ENCODE measurements at regions of chr19 and their contacts with region 1.

Region 1: GRCh38 chr19:58380722-58381466 is at the start of gene ZNF837:
- DNase-seq: peak; percentile 99
- ATAC-seq: peak; percentile 89
- H3K4me3 Mint-ChIP-seq: peak within 1 kb of the TSS; percentile 91
- H3K27ac Mint-ChIP-seq: peak within 1 kb of the TSS; percentile 94
- H3K4me1 Mint-ChIP-seq: peaks cover 19% of the 10 kb centered on the region
- H3K27me3 Mint-ChIP-seq: no peaks in the 10 kb centered on the region
- total RNA-seq, gene ZNF837: 2.0 to 2.5 TPM

Region 2: GRCh38 chr19:58228585-58229254 is 152.2 kb before region 1 on chr19 and contains the start of gene ZNF544:
- CTCF ChIA-PET with region 1: no interaction called
- POLR2A ChIA-PET with region 1: no interaction called
- intact Hi-C with region 1: loop called in 1 of 2 experiments (anchors 2 kb)
- DNase-seq: peak; percentile 85
- ATAC-seq: peak; percentile 87
- H3K4me3 Mint-ChIP-seq: peak within 1 kb of the TSS; percentile 91
- H3K27ac Mint-ChIP-seq: peak within 1 kb of the TSS; percentile 95
- H3K4me1 Mint-ChIP-seq: peaks cover 24% of the 10 kb centered on the region
- H3K27me3 Mint-ChIP-seq: no peaks in the 10 kb centered on the region
- total RNA-seq, gene ZNF544: 32.2 to 38.5 TPM

Region 3: DNA sequence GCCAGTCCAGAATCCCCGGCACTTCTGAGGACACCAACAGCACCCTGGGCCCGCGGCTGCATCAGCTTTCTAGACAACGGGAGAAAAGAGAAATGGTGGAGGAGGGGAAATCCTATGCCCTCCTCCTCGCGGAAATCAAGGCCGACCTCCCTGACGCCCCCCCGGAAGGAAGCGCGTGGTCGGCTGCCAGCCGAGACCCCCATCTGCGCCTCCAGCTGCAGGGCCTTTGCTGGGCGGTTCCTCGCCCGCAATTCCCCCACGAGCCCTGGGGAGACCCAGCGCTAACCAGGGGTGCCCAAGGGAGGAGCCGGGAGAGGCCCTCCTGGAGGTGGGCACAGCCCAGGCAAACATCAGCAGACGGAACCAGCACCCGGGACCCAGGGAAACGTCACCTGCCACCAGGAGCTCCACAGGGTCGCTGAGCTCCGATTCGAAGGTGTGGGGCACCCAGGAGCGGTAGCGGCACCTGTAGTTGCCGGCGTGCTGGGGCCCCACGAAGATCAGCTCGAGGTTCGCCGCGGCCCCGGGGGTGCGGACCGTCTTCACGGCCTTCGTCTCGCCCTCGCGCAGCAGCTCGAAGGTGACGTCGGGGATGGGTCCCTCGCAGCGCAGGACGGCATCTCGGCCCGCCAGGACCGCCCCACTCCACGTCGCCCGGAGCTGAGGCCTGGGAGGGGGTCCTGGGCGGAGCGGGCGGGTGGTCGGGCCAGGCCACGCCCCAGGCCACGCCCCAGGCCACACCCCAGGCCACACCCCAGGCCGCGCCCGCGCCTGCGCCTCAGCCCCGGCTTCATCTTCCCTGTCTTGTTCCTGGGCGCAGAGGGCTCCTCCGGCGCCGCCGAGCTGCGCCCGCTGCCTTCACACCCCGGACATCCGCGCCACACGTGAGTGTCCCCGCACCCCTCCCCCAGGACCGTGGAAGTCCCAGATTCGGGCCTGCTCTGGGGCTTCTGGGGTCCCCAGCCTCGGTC is 33.6 kb before region 1 on chr19:
- CTCF ChIA-PET with region 1: no interaction called
- POLR2A ChIA-PET with region 1: no interaction called
- intact Hi-C with region 1: loop called in 1 of 2 experiments (anchors 1 kb)
- DNase-seq: peak; percentile 87
- ATAC-seq: peak; percentile 97
- H3K4me3 Mint-ChIP-seq: peak overlapping the region; percentile 87
- H3K27ac Mint-ChIP-seq: peak overlapping the region; percentile 70
- H3K4me1 Mint-ChIP-seq: peaks cover 16% of the 10 kb centered on the region
- H3K27me3 Mint-ChIP-seq: peaks cover 10% of the 10 kb centered on the region

Region 4: GRCh38 chr19:58439576-58440554 is 59.0 kb after region 1 on chr19 and contains the start of gene ZNF132:
- CTCF ChIA-PET with region 1: no interaction called
- POLR2A ChIA-PET with region 1: no interaction called
- intact Hi-C with region 1: loop called (anchors 1 kb)
- DNase-seq: peak; percentile 96
- ATAC-seq: peak; percentile 98
- H3K4me3 Mint-ChIP-seq: peak within 1 kb of the TSS; percentile 82
- H3K27ac Mint-ChIP-seq: peak within 1 kb of the TSS; percentile 95
- H3K4me1 Mint-ChIP-seq: peaks cover 29% of the 10 kb centered on the region
- H3K27me3 Mint-ChIP-seq: no peaks in the 10 kb centered on the region
- total RNA-seq, gene ZNF132: 3.3 to 4.4 TPM

Region 5: GRCh38 chr19:58499021-58499927 is 118.4 kb after region 1 on chr19:
- CTCF ChIA-PET with region 1: no interaction called
- POLR2A ChIA-PET with region 1: no interaction called
- intact Hi-C with region 1: loop called in 1 of 2 experiments (anchors 1 kb)
- DNase-seq: peak; percentile 100
- ATAC-seq: peak; percentile 99
- H3K4me3 Mint-ChIP-seq: peak overlapping the region; percentile 81
- H3K27ac Mint-ChIP-seq: peak overlapping the region; percentile 95
- H3K4me1 Mint-ChIP-seq: peaks cover 19% of the 10 kb centered on the region
- H3K27me3 Mint-ChIP-seq: no peaks in the 10 kb centered on the region

Region 6: GRCh38 chr19:58558623-58559274 is 177.9 kb after region 1 on chr19:
- CTCF ChIA-PET with region 1: interaction called, 3 read pairs
- POLR2A ChIA-PET with region 1: no interaction called
- intact Hi-C with region 1: loop called in 1 of 2 experiments (anchors 1 kb)
- DNase-seq: peak; percentile 100
- ATAC-seq: peak; percentile 69
- H3K4me3 Mint-ChIP-seq: peak overlapping the region; percentile 92
- H3K27ac Mint-ChIP-seq: peak overlapping the region; percentile 100
- H3K4me1 Mint-ChIP-seq: peaks cover 65% of the 10 kb centered on the region
- H3K27me3 Mint-ChIP-seq: no peaks in the 10 kb centered on the region

Measured in activated CD4-positive, alpha-beta T cell treated with anti-CD3 and anti-CD28 coated beads for 36 hours (primary cell).